Activated CD4-positive, alpha-beta T cell treated with anti-CD3 and anti-CD28 coated beads, Interleukin-2, amount 10 ng/mL, durations not matched to agents 24 days and 14 days (primary cell): ENCODE measurements at regions of chr16 and their contacts with region 1.

Region 1: DNA sequence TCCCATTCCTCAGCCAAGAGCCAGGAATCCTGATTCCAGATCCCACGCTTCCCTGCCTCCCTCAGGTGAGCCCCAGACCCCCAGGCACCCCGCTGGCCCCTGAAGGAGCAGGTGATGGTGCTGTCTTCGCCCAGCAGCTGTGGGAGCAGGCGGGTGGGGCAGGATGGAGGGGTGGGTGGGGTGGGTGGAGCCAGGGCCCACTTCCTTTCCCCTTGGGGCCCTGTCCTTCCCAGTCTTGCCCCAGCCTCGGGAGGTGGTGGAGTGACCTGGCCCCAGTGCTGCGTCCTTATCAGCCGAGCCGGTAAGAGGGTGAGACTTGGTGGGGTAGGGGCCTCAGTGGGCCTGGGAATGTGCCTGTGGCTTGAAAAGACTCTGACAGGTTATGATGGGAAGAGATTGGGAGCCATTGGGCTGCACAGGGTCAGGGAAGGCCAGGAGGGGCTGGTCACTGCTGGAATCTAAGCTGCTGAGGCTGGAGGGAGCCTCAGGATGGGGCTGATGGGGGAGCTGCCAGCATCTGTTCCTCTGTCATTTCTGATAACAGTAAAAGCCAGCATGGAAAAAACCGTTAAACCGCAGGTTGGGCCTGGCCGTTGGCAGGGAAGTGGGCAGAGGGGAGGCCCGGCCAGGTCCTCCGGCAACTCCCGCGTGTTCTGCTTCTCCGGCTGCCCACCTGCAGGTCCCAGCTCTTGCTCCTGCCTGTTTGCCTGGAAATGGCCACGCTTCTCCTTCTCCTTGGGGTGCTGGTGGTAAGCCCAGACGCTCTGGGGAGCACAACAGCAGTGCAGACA is at the start of gene SPN:
- DNase-seq: peak; percentile 86
- H3K4me3 Mint-ChIP-seq: peak within 1 kb of the TSS; percentile 97
- H3K27ac Mint-ChIP-seq: peak within 1 kb of the TSS; percentile 94
- H3K4me1 Mint-ChIP-seq: peaks cover 52% of the 10 kb centered on the region
- H3K27me3 Mint-ChIP-seq: no peaks in the 10 kb centered on the region
- total RNA-seq, gene SPN: 157 and 165 TPM in 2 replicates

Region 2: GRCh38 chr16:29645694-29646187 is 17.5 kb before region 1 on chr16:
- intact Hi-C with region 1: loop called (anchors 2 kb)
- DNase-seq: peak; percentile 67
- H3K4me3 Mint-ChIP-seq: no peak overlapping the region
- H3K27ac Mint-ChIP-seq: peak overlapping the region; percentile 57
- H3K4me1 Mint-ChIP-seq: peaks cover 34% of the 10 kb centered on the region
- H3K27me3 Mint-ChIP-seq: no peaks in the 10 kb centered on the region